Breast epithelium (tissue), 4 donors: ENCODE measurements at regions of chr6 and their contacts with region 1.

Region 1: DNA sequence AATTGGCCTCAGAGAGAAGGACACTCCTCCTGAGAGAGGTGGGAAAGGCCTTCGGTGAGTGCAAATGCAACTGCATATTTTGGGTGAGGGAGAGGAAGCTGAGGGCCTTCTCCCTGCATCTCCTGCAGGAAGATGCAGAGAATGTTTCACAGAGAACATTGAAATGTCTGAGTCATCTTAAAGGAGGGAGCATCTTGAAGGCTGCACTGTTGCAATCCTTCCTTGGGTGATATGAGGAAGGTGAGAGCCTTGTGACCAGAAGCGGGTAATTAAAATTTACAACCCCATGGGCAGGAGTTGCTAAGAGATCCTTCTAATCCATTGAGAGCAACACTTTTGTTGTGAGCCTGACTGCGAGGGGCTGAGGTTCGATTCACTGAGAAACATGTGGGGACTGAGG is 375.7 kb upstream of the MARCKS start:
- DNase-seq: no peak
- H3K4me3 ChIP-seq: no peak overlapping the region
- H3K27ac ChIP-seq: no peak overlapping the region
- H3K4me1 ChIP-seq: no peaks in the 10 kb centered on the region
- H3K27me3 ChIP-seq: no peaks in the 10 kb centered on the region
- CTCF ChIP-seq: no peak
- POLR2A ChIP-seq: no peak

Region 2: GRCh38 chr6:113744861-113745260 is 263.4 kb after region 1 on chr6:
- intact Hi-C with region 1: loop called (anchors 5 kb)
- DNase-seq: no peak
- H3K4me3 ChIP-seq: no peak overlapping the region
- H3K27ac ChIP-seq: no peak overlapping the region
- H3K4me1 ChIP-seq: no peaks in the 10 kb centered on the region
- H3K27me3 ChIP-seq: no peaks in the 10 kb centered on the region
- CTCF ChIP-seq: no peak
- POLR2A ChIP-seq: no peak